Common myeloid progenitor, CD34-positive (primary cell): ENCODE measurements at regions of chr16 and their contacts with region 1.

Region 1: GRCh38 chr16:67883872-67884261 is 818 bp upstream of the NRN1L start:
- DNase-seq: peak; percentile 50 to 70 (median 66)
- H3K4me3 ChIP-seq: no peak overlapping the region
- H3K27ac ChIP-seq: no peak overlapping the region
- H3K4me1 ChIP-seq: no peaks in the 10 kb centered on the region
- H3K27me3 ChIP-seq: no peaks in the 10 kb centered on the region

Region 2: DNA sequence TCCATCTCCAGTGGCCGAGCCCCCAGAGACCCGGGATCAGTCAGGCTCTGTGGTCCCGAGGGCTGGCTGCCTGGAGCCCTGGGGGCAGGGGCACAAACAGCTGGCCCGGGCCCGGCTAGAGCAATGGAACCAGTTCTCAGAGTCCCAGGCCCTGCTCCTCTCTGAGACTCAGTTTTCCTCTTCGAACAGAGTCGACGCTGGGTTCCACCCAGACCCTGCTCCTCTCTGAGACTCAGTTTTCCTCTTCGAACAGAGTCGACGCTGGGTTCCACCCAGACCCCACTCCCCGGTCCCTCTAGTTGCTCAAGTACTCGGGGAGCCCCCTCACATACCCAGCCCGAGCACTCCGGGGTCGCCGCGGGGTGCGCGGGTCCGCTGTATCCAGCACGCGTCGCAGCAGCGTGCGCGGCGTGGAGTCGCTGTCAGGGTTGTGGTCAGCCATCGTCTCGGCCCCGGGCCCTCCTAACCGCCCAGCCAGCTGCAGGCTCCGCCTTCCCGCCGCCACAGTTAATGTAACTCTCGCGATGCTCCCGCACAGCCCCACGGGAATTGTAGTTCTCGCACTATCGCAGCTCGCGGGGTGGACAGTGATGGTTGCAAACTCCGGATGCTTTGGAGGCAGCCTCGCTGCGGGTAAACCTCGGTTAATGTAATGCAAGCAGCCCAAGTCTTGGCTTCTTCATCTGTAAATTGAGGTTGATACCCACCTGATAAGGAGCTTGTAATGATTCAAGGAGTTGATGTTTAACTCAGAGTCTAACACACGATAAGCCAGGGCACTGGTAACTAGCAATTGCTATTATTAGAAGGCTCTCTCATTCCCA is 50.2 kb before region 1 on chr16:
- CTCF ChIA-PET with region 1: no interaction called
- POLR2A ChIA-PET with region 1: no interaction called
- DNase-seq: peak; percentile 81 to 93 (median 91)
- H3K4me3 ChIP-seq: peak overlapping the region; percentile 60 to 83 (median 74)
- H3K27ac ChIP-seq: peak overlapping the region in 1 of 2 experiments; percentile 81
- H3K4me1 ChIP-seq: peaks cover 3 to 18% (median 15%) of the 10 kb centered on the region in 4 experiments
- H3K27me3 ChIP-seq: no peaks in the 10 kb centered on the region

Region 3: GRCh38 chr16:67846320-67847063 is 37.4 kb before region 1 on chr16 and contains the start of gene NUTF2:
- CTCF ChIA-PET with region 1: interaction called, 10 read pairs
- POLR2A ChIA-PET with region 1: no interaction called
- DNase-seq: peak; percentile 93 to 97 (median 97)
- H3K4me3 ChIP-seq: peak within 1 kb of the TSS; percentile 81 to 97 (median 93)
- H3K27ac ChIP-seq: peak within 1 kb of the TSS; percentile 84 to 94
- H3K4me1 ChIP-seq: peaks cover 23 to 55% (median 50%) of the 10 kb centered on the region in 4 experiments
- H3K27me3 ChIP-seq: no peaks in the 10 kb centered on the region

Region 4: GRCh38 chr16:67872786-67873537 is 10.9 kb before region 1 on chr16 and contains the start of gene EDC4:
- CTCF ChIA-PET with region 1: interaction called, 18 read pairs
- POLR2A ChIA-PET with region 1: no interaction called
- DNase-seq: peak; percentile 79 to 85 (median 84)
- H3K4me3 ChIP-seq: peak within 1 kb of the TSS; percentile 83 to 98 (median 91)
- H3K27ac ChIP-seq: peak within 1 kb of the TSS; percentile 84 to 91
- H3K4me1 ChIP-seq: peaks cover 7 to 33% (median 27%) of the 10 kb centered on the region in 4 experiments
- H3K27me3 ChIP-seq: no peaks in the 10 kb centered on the region

Region 5: GRCh38 chr16:67942200-67942509 is 58.3 kb after region 1 on chr16:
- CTCF ChIA-PET with region 1: interaction called, 359 read pairs
- POLR2A ChIA-PET with region 1: no interaction called
- DNase-seq: peak in 2 of 3 donors; percentile 32 to 37
- H3K4me3 ChIP-seq: no peak overlapping the region
- H3K27ac ChIP-seq: no peak overlapping the region
- H3K4me1 ChIP-seq: peaks cover 1 to 21% (median 15%) of the 10 kb centered on the region in 4 experiments
- H3K27me3 ChIP-seq: no peaks in the 10 kb centered on the region